HepG2 (cell line): ENCODE measurements at regions of chrX and their contacts with region 1.

Region 1: GRCh38 chrX:43860646-43861370 is 21.4 kb downstream of the MAOB start:
- DNase-seq: peak; percentile 81
- ATAC-seq: peak; percentile 68
- H3K4me3 ChIP-seq: no peak overlapping the region; a peak in 1 of 6 replicates
- H3K27ac ChIP-seq: peak overlapping the region; percentile 64
- H3K4me1 ChIP-seq: peaks cover 35% of the 10 kb centered on the region
- H3K27me3 ChIP-seq: no peaks in the 10 kb centered on the region
- CTCF ChIP-seq: no peak
- EP300 ChIP-seq: no peak
- POLR2A ChIP-seq: no peak
- RAD21 ChIP-seq: no peak

Region 2: DNA sequence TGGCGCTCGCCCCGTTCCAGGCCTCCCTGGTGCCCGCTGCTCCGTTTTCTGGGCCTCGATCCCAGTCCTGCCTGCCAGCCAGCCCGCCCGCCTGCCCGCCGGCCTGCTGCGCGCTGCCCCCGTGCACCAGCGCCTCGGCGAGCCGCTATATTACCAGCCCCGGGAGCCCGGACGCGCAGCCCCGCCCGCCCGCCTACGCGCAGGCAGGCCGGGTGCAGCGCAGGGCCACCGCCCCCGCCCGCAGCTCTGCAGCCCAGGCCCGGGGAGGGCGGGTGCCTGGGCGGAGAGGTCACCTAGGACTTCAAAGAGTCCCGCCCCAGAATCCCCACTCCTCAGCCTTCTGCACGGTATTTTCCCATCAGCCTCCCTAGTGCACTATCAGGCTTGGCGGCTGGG is 21.5 kb after region 1 on chrX and contains the start of gene MAOB:
- CTCF ChIA-PET with region 1: no interaction called
- POLR2A ChIA-PET with region 1: interaction called, 7 read pairs
- in situ Hi-C with region 1: no loop called
- intact Hi-C with region 1: loop called (anchors 2 kb)
- DNase-seq: peak; percentile 63
- ATAC-seq: peak; percentile 95
- H3K4me3 ChIP-seq: peak within 1 kb of the TSS; percentile 42 to 75 (median 69); a peak in 5 of 6 replicates
- H3K27ac ChIP-seq: peak within 1 kb of the TSS; percentile 91
- H3K4me1 ChIP-seq: peaks cover 40% of the 10 kb centered on the region
- H3K27me3 ChIP-seq: no peaks in the 10 kb centered on the region
- CTCF ChIP-seq: no peak
- EP300 ChIP-seq: peak in 1 of 2 experiments; percentile 29; a peak in 1 of 4 replicates
- POLR2A ChIP-seq: peak in 1 of 2 experiments; percentile 45; a peak in 1 of 4 replicates
- RAD21 ChIP-seq: no peak
- total RNA-seq, gene MAOB: 11.0 and 22.5 TPM in 2 replicates